WTC11 (cell line): ENCODE measurements at regions of chr14 and their contacts with region 1.

Region 1: DNA sequence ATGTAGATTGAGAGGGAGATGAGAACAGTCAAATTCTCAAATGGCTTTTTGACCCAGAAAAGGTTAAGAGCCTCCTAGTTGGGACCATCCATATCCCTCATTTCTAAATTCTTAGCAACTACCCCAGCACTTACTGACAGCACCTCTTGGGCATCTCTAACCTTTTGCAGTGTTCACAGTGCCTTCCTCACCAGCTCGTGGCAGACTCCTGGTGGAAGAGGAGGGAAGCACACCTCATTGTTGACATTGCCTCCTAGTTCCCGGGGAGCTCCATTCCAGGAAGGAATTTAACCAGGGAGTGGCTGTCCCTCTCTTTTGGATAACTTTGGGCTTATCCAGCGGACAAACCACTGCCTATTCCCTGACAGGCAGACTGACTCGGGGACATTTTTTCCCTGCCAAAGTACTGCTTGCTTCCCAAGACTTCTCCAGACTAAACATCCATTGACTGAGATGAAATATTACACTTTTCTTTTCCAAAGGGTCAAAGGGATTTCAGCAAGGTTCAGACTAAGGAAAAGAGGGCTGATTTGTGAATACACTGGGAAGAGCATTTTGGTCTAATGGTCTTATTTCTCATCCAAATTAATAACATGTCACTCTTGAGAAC is 9.0 kb upstream of the OR6J1 start:
- DNase-seq: peak; percentile 86
- ATAC-seq: peak; percentile 99
- H3K4me3 Mint-ChIP-seq: no peak overlapping the region
- H3K27ac Mint-ChIP-seq: no peak overlapping the region
- H3K4me1 Mint-ChIP-seq: 0 out of 2 replicates have a peak, but pooled peaks cover 3% of the 10 kb centered on the region
- H3K27me3 Mint-ChIP-seq: no peaks in the 10 kb centered on the region; the same call in 1 of the 2 replicates
- CTCF ChIP-seq: peak; percentile 68

Region 2: DNA sequence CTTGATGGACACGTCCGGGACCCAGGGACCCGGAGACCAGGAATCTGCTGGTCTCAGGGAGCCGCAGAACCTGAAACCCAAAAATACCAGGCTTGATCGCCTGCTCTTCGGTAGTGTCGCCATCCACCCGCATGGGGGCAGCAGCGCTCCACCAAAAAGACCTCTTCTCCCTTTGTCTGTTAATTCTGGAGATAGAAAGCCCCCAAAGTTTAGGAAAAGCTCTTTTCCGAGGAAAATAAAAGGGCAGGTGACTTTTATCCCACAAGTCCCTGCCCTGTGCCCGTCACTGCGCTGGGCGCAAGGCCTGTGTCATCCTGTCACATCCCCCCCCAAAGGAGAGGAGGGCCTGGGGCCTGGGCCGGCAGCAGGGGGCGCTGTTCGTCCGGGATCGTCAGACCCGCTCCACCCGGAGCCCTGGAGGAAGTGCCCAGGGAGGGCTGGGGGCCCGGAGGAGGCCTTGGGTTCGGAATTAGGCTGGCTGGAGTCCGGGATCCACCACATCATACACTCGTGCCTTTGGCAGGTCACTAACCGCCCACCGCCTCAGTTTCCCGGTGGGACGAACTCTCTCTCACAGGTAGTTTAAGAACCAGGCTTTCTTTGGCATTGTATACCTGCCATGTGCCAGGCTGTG is 96.0 kb before region 1 on chr14:
- CTCF ChIA-PET with region 1: interaction called, 12 read pairs
- POLR2A ChIA-PET with region 1: no interaction called
- DNase-seq: peak; percentile 94
- ATAC-seq: peak; percentile 78
- H3K4me3 Mint-ChIP-seq: peak overlapping the region; percentile 53
- H3K27ac Mint-ChIP-seq: 0 out of 2 replicates have a peak overlapping the region, but pooled peaks have one; percentile 49
- H3K4me1 Mint-ChIP-seq: peaks cover 46% of the 10 kb centered on the region
- H3K27me3 Mint-ChIP-seq: no peaks in the 10 kb centered on the region
- CTCF ChIP-seq: peak; percentile 100

Region 3: GRCh38 chr14:22589096-22589839 is 63.8 kb before region 1 on chr14 and contains the start of gene DAD1:
- CTCF ChIA-PET with region 1: interaction called, 13 read pairs
- POLR2A ChIA-PET with region 1: interaction called, 4 read pairs
- DNase-seq: peak; percentile 99
- ATAC-seq: peak; percentile 92
- H3K4me3 Mint-ChIP-seq: peak within 1 kb of the TSS; percentile 98
- H3K27ac Mint-ChIP-seq: peak within 1 kb of the TSS; percentile 99
- H3K4me1 Mint-ChIP-seq: peaks cover 45% of the 10 kb centered on the region
- H3K27me3 Mint-ChIP-seq: peaks cover 3% of the 10 kb centered on the region; the same call in 1 of the 2 replicates
- CTCF ChIP-seq: no peak
- total RNA-seq, gene DAD1: 125 to 156 TPM (median 144 TPM) in 3 replicates

Region 4: DNA sequence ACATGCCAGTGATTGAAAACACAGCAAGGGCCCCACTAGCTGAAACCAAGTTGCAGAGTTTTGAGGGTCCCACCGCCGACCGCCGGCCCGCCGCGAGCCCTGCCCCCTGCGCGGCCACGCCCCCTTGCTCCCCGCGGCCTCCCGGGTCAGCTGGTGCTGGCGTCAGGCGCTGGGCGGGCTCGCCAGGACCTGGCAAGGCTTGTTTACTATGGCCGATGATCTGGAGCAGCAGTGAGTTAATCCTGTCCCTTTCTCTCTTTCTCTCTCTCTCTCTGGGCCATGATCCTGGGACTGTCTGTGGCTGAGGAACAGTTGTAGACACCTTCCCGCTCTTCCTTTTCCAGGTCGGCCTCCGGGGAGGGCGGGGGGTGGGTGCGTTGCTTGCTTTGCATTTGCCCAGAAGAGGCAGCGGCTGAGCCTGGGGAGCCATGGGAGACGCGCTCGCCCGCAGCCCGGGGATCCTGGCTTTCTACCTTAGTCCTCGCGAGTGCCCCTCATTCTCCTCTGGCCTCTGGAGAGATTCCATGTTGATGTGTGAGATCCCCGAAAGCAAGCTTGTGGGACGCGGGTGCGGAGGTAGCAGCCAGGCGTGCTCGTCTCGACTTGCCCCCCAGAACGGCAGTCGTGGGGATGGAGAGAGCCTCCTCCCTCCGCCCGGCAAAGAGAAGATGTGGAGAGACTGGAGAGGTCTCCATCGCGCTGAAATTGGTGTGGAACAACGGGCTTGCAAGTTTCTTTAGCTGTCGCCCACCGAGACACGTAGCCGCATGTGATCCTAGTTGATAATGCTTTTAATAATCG is 54.8 kb before region 1 on chr14 and contains the start of gene ABHD4:
- CTCF ChIA-PET with region 1: interaction called, 27 read pairs
- POLR2A ChIA-PET with region 1: no interaction called
- DNase-seq: peak; percentile 83
- ATAC-seq: peak; percentile 86
- H3K4me3 Mint-ChIP-seq: peak within 1 kb of the TSS; percentile 99
- H3K27ac Mint-ChIP-seq: peak within 1 kb of the TSS; percentile 99
- H3K4me1 Mint-ChIP-seq: peaks cover 28% of the 10 kb centered on the region
- H3K27me3 Mint-ChIP-seq: no peaks in the 10 kb centered on the region
- CTCF ChIP-seq: no peak
- total RNA-seq, gene ABHD4: 33.5 to 36.1 TPM (median 33.9 TPM) in 3 replicates

Region 5: DNA sequence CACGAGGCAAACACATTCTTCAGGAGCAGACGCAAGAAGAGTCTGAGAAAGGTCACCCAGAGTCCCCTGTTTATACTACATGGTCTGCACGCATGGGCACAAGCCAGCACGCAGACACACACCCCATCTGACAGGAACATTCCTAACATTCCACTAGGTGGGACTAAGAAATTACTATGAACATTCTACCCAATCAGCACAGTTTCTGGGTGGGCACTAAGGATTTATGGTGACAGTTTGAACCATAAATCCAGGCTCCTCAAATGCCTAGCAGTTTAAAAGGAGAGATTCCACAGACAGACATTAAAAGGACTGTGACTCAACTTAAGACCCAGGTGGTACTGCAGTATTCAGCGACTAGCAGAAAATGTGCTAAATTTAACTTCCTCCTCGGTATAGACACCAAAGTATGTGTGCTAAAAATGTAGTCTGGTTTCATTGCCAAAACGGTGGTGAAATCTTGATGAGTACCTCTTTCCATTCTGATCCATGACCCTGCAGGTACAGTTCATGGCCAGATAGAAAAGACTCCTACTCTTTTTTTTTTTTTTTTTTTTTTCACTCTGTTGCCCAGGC is 38.8 kb before region 1 on chr14:
- CTCF ChIA-PET with region 1: interaction called, 11 read pairs
- POLR2A ChIA-PET with region 1: no interaction called
- DNase-seq: no peak
- ATAC-seq: peak; percentile 75
- H3K4me3 Mint-ChIP-seq: no peak overlapping the region
- H3K27ac Mint-ChIP-seq: 0 out of 2 replicates have a peak overlapping the region, but pooled peaks have one; percentile 37
- H3K4me1 Mint-ChIP-seq: peaks cover 11% of the 10 kb centered on the region
- H3K27me3 Mint-ChIP-seq: peaks cover 9% of the 10 kb centered on the region
- CTCF ChIP-seq: no peak

Region 6: DNA sequence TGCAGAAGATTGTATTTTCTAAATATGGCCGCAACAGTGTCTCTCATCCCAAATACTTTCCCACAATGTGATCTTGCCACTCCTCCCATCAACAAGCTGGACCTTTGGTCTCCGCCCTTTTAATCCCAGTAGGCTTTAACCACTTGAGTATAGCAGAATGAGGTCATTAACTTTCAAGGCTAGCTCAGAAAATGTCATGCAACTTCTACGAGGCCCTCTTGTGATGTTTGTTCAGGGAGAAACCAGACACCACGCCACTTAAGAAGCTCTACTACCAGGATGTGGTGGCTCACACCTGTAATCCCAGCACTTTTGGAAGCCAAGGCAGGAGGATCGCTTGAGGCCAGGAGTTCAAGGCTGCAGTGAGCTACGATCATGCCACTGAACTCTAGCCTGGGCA is 11.1 kb after region 1 on chr14:
- CTCF ChIA-PET with region 1: interaction called, 19 read pairs
- POLR2A ChIA-PET with region 1: no interaction called
- DNase-seq: no peak
- ATAC-seq: no peak
- H3K4me3 Mint-ChIP-seq: no peak overlapping the region
- H3K27ac Mint-ChIP-seq: no peak overlapping the region
- H3K4me1 Mint-ChIP-seq: peaks cover 6% of the 10 kb centered on the region; the same call in 1 of the 2 replicates
- H3K27me3 Mint-ChIP-seq: peaks cover 2% of the 10 kb centered on the region; the same call in 1 of the 2 replicates
- CTCF ChIP-seq: no peak

Region 7: GRCh38 chr14:22737052-22737451 is 83.9 kb after region 1 on chr14:
- CTCF ChIA-PET with region 1: no interaction called
- POLR2A ChIA-PET with region 1: no interaction called
- DNase-seq: no peak
- ATAC-seq: no peak
- H3K4me3 Mint-ChIP-seq: no peak overlapping the region
- H3K27ac Mint-ChIP-seq: no peak overlapping the region
- H3K4me1 Mint-ChIP-seq: no peaks in the 10 kb centered on the region
- H3K27me3 Mint-ChIP-seq: peaks cover 3% of the 10 kb centered on the region; the same call in 1 of the 2 replicates
- CTCF ChIP-seq: no peak

Region 8: DNA sequence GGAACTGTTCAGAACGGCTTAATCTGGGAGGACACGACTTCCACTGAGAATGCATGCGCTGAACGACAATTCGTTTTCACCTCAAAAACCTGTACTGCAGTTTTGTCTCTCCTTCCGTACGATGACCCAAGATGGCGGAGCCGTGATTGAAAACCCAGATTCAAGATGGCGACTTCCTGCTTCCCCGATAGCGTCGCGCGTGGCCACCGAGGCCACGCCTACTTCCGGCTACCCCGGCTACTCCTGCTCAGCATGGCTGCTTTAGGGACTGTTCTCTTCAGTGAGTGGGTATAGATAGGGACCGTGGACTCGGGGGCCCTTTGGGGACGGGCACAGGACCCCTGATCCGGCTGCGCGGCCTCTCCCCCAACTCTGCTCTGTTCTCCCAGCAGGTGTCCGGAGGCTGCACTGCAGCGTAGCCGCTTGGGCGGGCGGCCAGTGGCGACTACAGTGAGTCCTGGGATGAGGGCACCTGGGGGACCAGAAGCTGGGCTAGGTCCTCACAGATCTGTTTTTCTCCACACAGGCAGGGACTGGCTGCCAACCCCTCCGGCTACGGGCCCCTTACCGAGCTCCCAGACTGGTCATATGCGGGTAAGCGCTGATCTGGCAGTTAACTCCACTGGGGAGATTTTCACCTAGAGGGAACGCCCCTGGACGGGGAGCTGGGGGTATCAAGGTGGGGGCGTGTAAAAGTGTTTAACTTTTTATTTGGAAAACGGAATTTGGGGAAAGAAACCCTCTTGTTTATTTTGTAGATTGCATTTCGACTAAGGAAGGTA is 176.7 kb after region 1 on chr14 and contains the start of gene MRPL52:
- CTCF ChIA-PET with region 1: no interaction called
- POLR2A ChIA-PET with region 1: no interaction called
- DNase-seq: peak; percentile 72
- ATAC-seq: peak; percentile 79
- H3K4me3 Mint-ChIP-seq: peak within 1 kb of the TSS; percentile 90
- H3K27ac Mint-ChIP-seq: peak within 1 kb of the TSS; percentile 97
- H3K4me1 Mint-ChIP-seq: peaks cover 29% of the 10 kb centered on the region
- H3K27me3 Mint-ChIP-seq: peaks cover 3% of the 10 kb centered on the region; the same call in 1 of the 2 replicates
- CTCF ChIP-seq: no peak
- total RNA-seq, gene MRPL52: 170 to 200 TPM (median 200 TPM) in 3 replicates